ENCODE measurements at regions of chr6 and their contacts with region 1.

Region 1: DNA sequence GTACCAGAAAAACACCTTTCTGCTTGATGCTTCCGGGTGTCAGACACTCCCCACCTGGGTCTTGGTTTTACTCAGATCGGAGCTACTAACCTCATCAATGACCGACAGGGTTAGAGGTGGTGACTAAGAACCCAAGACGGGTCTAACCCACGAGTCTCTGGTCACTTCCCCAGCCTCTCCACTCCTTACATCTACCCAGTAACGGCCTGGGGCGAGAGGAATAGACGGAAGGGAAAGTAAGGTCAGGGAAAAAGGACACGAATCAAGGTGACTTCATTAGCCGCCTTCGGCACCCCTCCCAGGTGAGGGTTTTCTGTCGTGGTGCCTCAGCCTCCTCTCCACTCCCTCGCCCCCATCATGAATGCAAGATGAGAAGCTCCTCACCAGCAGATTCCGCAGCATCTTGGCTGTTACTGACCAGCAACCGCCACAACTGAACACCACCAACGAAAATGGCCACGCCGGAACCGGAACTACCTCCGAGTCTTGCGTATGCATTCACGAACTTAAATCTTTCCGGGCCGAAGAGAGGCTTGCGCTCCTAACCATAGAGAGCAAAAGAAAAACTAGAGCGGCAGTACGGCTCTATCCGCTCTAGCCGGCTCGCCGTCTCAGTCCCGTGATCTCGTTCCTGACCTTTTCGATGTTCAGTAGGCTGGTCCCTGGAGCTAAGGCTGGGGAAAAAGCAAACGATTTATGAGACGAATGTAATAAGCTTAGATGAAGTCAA is at the start of gene COX7A2:
- DNase-seq: peak; percentile 62 to 92 (median 83)
- ATAC-seq: peak; percentile 96 to 98 (median 98)
- H3K4me3 ChIP-seq: peak within 1 kb of the TSS; percentile 88 to 98
- H3K4me3 Mint-ChIP-seq: peak within 1 kb of the TSS; percentile 94 to 100 (median 97)
- H3K27ac ChIP-seq: peak within 1 kb of the TSS; percentile 97
- H3K27ac Mint-ChIP-seq: peak within 1 kb of the TSS; percentile 98
- H3K4me1 ChIP-seq: peaks cover 0 to 19% of the 10 kb centered on the region in 2 experiments
- H3K4me1 Mint-ChIP-seq: peaks cover 31 to 40% (median 34%) of the 10 kb centered on the region in 3 donors
- H3K27me3 ChIP-seq: peaks cover 0 to 5% of the 10 kb centered on the region in 2 experiments
- H3K27me3 Mint-ChIP-seq: peaks cover 7 to 13% of the 10 kb centered on the region in 2 donors
- total RNA-seq, gene COX7A2: 195 to 213 (median 198) TPM

Region 2: GRCh38 chr6:75065523-75065922 is 178.0 kb before region 1 on chr6:
- CTCF ChIA-PET with region 1: no interaction called
- POLR2A ChIA-PET with region 1: no interaction called
- DNase-seq: no peak
- ATAC-seq: no peak
- H3K4me3 ChIP-seq: no peak overlapping the region
- H3K4me3 Mint-ChIP-seq: no peak overlapping the region
- H3K27ac ChIP-seq: no peak overlapping the region
- H3K27ac Mint-ChIP-seq: no peak overlapping the region
- H3K4me1 ChIP-seq: no peaks in the 10 kb centered on the region
- H3K4me1 Mint-ChIP-seq: no peaks in the 10 kb centered on the region
- H3K27me3 ChIP-seq: no peaks in the 10 kb centered on the region
- H3K27me3 Mint-ChIP-seq: no peaks in the 10 kb centered on the region

Region 3: DNA sequence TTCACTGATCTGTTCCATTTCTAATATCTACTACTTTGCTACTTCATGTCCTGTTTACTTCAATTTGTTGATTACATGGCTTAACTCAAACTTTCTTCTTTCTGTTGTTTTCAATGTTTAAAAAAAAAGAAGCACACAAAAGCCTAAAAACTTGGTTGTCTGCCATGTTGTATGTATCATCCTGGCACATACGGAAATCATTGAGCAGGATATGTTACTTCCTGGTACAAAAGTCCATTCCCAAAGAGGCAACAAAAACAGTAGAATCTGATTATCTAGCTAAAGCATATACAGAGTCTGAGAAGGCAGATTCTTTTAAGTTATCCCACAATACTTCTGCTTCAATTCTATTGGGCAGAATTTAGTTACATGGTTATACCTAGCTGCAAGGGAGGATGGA is 23.1 kb before region 1 on chr6:
- CTCF ChIA-PET with region 1: no interaction called
- POLR2A ChIA-PET with region 1: interaction called, 5 to 14 read pairs
- DNase-seq: no peak
- ATAC-seq: no peak
- H3K4me3 ChIP-seq: no peak overlapping the region
- H3K4me3 Mint-ChIP-seq: no peak overlapping the region
- H3K27ac ChIP-seq: no peak overlapping the region
- H3K27ac Mint-ChIP-seq: no peak overlapping the region
- H3K4me1 ChIP-seq: no peaks in the 10 kb centered on the region
- H3K4me1 Mint-ChIP-seq: no peaks in the 10 kb centered on the region
- H3K27me3 ChIP-seq: peaks cover 0 to 8% of the 10 kb centered on the region in 2 experiments
- H3K27me3 Mint-ChIP-seq: peaks cover 33 to 45% of the 10 kb centered on the region in 2 donors

Region 4: GRCh38 chr6:75386053-75386770 is 142.7 kb after region 1 on chr6:
- CTCF ChIA-PET with region 1: no interaction called
- POLR2A ChIA-PET with region 1: no interaction called
- DNase-seq: no peak
- ATAC-seq: no peak
- H3K4me3 ChIP-seq: no peak overlapping the region
- H3K4me3 Mint-ChIP-seq: no peak overlapping the region
- H3K27ac ChIP-seq: no peak overlapping the region
- H3K27ac Mint-ChIP-seq: no peak overlapping the region
- H3K4me1 ChIP-seq: no peaks in the 10 kb centered on the region
- H3K4me1 Mint-ChIP-seq: no peaks in the 10 kb centered on the region
- H3K27me3 ChIP-seq: no peaks in the 10 kb centered on the region
- H3K27me3 Mint-ChIP-seq: peaks cover 7 to 16% of the 10 kb centered on the region in 2 donors

Region 5: GRCh38 chr6:75402296-75402695 is 158.8 kb after region 1 on chr6:
- CTCF ChIA-PET with region 1: no interaction called
- POLR2A ChIA-PET with region 1: no interaction called
- DNase-seq: no peak
- ATAC-seq: no peak
- H3K4me3 ChIP-seq: no peak overlapping the region
- H3K4me3 Mint-ChIP-seq: no peak overlapping the region
- H3K27ac ChIP-seq: no peak overlapping the region
- H3K27ac Mint-ChIP-seq: no peak overlapping the region
- H3K4me1 ChIP-seq: no peaks in the 10 kb centered on the region
- H3K4me1 Mint-ChIP-seq: peaks cover 0 to 7% (median 0%) of the 10 kb centered on the region in 3 donors
- H3K27me3 ChIP-seq: no peaks in the 10 kb centered on the region
- H3K27me3 Mint-ChIP-seq: peaks cover 0 to 8% of the 10 kb centered on the region in 2 donors

Measured in T-cell (primary cell).